Calu3 (cell line): ENCODE measurements at regions of chr15 and their contacts with region 1.

Region 1: GRCh38 chr15:83011271-83012075 is at the start of gene C15orf40:
- DNase-seq: peak; percentile 95
- H3K4me3 Mint-ChIP-seq: peak within 1 kb of the TSS; percentile 95
- H3K27ac Mint-ChIP-seq: peak within 1 kb of the TSS; percentile 97
- H3K4me1 Mint-ChIP-seq: peaks cover 36% of the 10 kb centered on the region
- H3K27me3 Mint-ChIP-seq: no peaks in the 10 kb centered on the region
- CTCF ChIP-seq: peak; percentile 44
- total RNA-seq, gene C15orf40: 34.0 and 40.7 TPM in 2 replicates

Region 2: DNA sequence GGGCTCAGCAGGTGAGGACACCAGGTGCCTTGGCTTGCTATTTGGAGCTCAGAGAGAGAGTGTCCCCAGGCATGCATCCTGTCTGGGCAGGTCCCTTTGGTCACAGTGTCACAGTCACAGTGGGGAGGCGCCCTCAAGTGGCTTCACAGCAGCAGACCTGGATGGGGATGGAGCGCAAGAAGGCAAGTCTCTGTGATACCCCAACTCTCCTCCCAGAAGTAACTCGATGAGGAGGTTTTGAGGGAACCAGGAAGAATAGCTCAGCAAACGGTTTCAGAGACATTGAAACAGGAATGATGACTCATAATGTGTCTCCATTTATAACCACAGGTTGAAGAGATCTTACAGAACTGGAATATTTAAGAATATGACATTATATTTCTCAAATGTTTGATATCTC is 369.2 kb after region 1 on chr15:
- CTCF ChIA-PET with region 1: no interaction called
- intact Hi-C with region 1: loop called (anchors 5 kb)
- DNase-seq: peak; percentile 79
- H3K4me3 Mint-ChIP-seq: no peak overlapping the region
- H3K27ac Mint-ChIP-seq: no peak overlapping the region
- H3K4me1 Mint-ChIP-seq: peaks cover 20% of the 10 kb centered on the region
- H3K27me3 Mint-ChIP-seq: peaks cover 26% of the 10 kb centered on the region
- CTCF ChIP-seq: no peak